Activated T-helper 1 cell treated with anti-CD3 and anti-CD28 coated beads, Interleukin-12 subunit alpha, Interleukin-12 subunit beta, Interleukin-2, Interleukin-4 antibody, amounts not matched to agents 30 ng/mL and 10 ng/mL and 1 ng/mL, durations not matched to agents 14 hours and 24 hours and 36 hours (primary cell): ENCODE measurements at regions of chr3 and their contacts with region 1.

Region 1: GRCh38 chr3:183766745-183767606 is 58.4 kb downstream of the MAP6D1 start:
- DNase-seq: peak; percentile 63
- H3K4me3 Mint-ChIP-seq: no peak overlapping the region
- H3K27ac Mint-ChIP-seq: no peak overlapping the region
- H3K4me1 Mint-ChIP-seq: peaks cover 7% of the 10 kb centered on the region
- H3K27me3 Mint-ChIP-seq: no peaks in the 10 kb centered on the region

Region 2: GRCh38 chr3:183481582-183481981 is 285.4 kb before region 1 on chr3:
- intact Hi-C with region 1: loop called (anchors 5 kb)
- DNase-seq: no peak
- H3K4me3 Mint-ChIP-seq: no peak overlapping the region
- H3K27ac Mint-ChIP-seq: no peak overlapping the region
- H3K4me1 Mint-ChIP-seq: peaks cover 10% of the 10 kb centered on the region
- H3K27me3 Mint-ChIP-seq: no peaks in the 10 kb centered on the region

Region 3: GRCh38 chr3:184099806-184100686 is 333.1 kb after region 1 on chr3:
- intact Hi-C with region 1: no loop called
- DNase-seq: no peak
- H3K4me3 Mint-ChIP-seq: no peak overlapping the region
- H3K27ac Mint-ChIP-seq: no peak overlapping the region
- H3K4me1 Mint-ChIP-seq: no peaks in the 10 kb centered on the region
- H3K27me3 Mint-ChIP-seq: peaks cover 4% of the 10 kb centered on the region